HCT116 (cell line): ENCODE measurements at regions of chr21 and their contacts with region 1.

Region 1: DNA sequence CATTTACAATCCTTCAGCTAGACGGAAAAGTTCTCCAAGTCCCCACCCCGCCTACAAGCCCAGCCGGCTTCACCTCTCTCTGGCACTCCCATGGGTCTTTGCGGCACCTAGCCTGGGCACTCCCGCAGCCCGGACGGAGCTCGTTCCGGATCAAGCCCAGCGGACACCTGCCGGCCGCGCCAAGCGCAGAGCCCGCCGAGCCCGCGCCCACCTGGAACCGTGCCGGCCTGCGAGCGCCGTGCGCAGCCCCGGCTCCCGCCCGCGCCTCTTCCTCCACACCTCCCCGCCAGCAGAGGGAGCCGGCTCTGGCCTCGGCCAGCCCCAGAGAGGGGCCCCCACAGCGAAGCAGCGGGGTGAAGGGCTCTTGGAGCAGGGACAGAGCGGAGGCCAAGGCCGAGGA is 50.0 kb upstream of the KRTAP19-8 start:
- DNase-seq: no peak
- ATAC-seq: no peak
- H3K4me3 ChIP-seq: no peak overlapping the region
- H3K27ac ChIP-seq: no peak overlapping the region
- H3K4me1 ChIP-seq: no peaks in the 10 kb centered on the region
- H3K27me3 ChIP-seq: no peaks in the 10 kb centered on the region
- CTCF ChIP-seq: no peak
- POLR2A ChIP-seq: no peak
- RAD21 ChIP-seq: no peak

Region 2: GRCh38 chr21:29085106-29085752 is 2003.1 kb before region 1 on chr21:
- CTCF ChIA-PET with region 1: no interaction called
- POLR2A ChIA-PET with region 1: no interaction called
- RAD21 ChIA-PET with region 1: no interaction called
- intact Hi-C with region 1: loop called (anchors 5 kb)
- DNase-seq: no peak
- ATAC-seq: no peak
- H3K4me3 ChIP-seq: no peak overlapping the region
- H3K27ac ChIP-seq: no peak overlapping the region
- H3K4me1 ChIP-seq: 0 out of 4 replicates have a peak, but pooled peaks cover 0 to 4% of the 10 kb centered on the region in 2 experiments
- H3K27me3 ChIP-seq: no peaks in the 10 kb centered on the region
- CTCF ChIP-seq: no peak
- POLR2A ChIP-seq: no peak
- RAD21 ChIP-seq: no peak

Region 3: GRCh38 chr21:29164325-29164942 is 1923.9 kb before region 1 on chr21:
- CTCF ChIA-PET with region 1: no interaction called
- POLR2A ChIA-PET with region 1: no interaction called
- RAD21 ChIA-PET with region 1: no interaction called
- intact Hi-C with region 1: loop called (anchors 10 kb)
- DNase-seq: peak; percentile 69
- ATAC-seq: peak; percentile 72
- H3K4me3 ChIP-seq: no peak overlapping the region
- H3K27ac ChIP-seq: no peak overlapping the region
- H3K4me1 ChIP-seq: peaks cover 18 to 36% of the 10 kb centered on the region in 2 experiments
- H3K27me3 ChIP-seq: no peaks in the 10 kb centered on the region
- CTCF ChIP-seq: peak; percentile 67 to 84 (median 69)
- POLR2A ChIP-seq: no peak
- RAD21 ChIP-seq: peak; percentile 84

Region 4: DNA sequence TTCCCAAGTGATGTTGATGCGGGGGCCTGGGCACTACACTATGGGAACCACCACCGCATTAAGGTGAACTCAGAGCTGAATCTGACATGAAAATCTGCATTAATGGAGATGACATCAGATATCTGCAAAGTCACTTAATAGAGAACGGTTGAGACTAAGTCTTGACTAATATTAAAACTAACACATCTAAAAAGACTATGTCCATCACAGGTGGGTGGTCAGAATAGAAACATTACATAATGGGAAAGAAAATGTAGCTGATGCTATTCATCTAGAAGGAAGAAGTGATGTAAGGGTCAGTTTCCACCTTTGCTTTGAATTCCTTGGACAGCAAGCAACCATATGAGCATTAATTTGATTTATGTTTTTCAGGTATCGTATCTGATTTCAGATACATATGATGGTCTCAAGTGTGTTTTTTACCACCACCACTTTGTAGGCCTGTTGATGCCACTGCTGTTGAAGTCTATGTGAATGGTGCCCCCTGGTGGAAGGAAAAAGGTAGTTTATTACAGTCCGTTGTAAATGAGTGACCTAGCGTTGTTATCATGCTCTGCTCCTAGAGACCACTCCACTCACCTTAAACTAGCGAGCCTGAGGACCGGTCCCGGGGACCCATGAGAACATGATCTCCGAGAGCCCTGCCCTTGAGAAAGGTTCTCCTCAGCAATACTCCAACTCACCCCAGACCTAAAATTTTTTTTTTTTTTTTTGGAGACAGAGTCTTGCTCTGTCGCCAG is 1716.1 kb before region 1 on chr21:
- CTCF ChIA-PET with region 1: no interaction called
- POLR2A ChIA-PET with region 1: no interaction called
- RAD21 ChIA-PET with region 1: no interaction called
- intact Hi-C with region 1: loop called (anchors 10 kb)
- DNase-seq: peak; percentile 67
- ATAC-seq: peak; percentile 88
- H3K4me3 ChIP-seq: no peak overlapping the region
- H3K27ac ChIP-seq: no peak overlapping the region
- H3K4me1 ChIP-seq: no peaks in the 10 kb centered on the region
- H3K27me3 ChIP-seq: no peaks in the 10 kb centered on the region
- CTCF ChIP-seq: peak; percentile 59 to 82 (median 61); a peak in 5 of 6 replicates
- POLR2A ChIP-seq: no peak
- RAD21 ChIP-seq: peak; percentile 77

Region 5: DNA sequence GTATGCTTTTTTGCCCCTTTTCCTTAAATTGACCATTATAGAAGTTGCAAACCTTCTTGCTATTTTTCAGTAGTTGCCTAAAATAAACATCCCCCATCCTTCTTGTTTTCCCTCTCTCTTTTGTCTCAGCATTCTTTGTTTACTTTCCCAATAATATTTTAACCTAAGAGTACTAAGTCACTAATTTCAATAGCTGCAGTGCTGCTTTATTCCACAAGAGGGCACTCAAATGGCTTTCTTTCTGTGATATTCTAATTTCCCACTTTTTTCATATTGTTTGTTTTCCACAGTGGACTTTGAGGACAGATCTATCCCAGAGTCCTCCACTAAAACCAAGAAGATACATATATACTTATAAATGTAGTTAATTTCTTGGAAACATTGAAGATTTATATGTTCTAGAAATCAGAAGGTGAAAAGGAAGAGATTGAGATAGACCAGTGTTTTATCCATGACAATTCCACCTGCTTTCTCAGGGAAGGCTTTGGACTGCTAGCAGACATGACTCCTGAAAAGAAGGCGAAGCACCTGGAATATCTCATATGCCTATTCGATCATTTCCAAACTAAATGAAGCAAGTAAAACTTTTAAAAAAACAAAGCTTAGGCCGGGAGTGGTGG is 1043.8 kb before region 1 on chr21:
- CTCF ChIA-PET with region 1: no interaction called
- POLR2A ChIA-PET with region 1: no interaction called
- RAD21 ChIA-PET with region 1: no interaction called
- intact Hi-C with region 1: loop called (anchors 1 kb)
- DNase-seq: no peak
- ATAC-seq: no peak
- H3K4me3 ChIP-seq: no peak overlapping the region
- H3K27ac ChIP-seq: no peak overlapping the region
- H3K4me1 ChIP-seq: no peaks in the 10 kb centered on the region
- H3K27me3 ChIP-seq: no peaks in the 10 kb centered on the region
- CTCF ChIP-seq: peak in 2 of 3 experiments; percentile 60 to 76; a peak in 4 of 6 replicates
- POLR2A ChIP-seq: no peak
- RAD21 ChIP-seq: peak; percentile 10; the same call in 1 of the 2 replicates

Region 6: GRCh38 chr21:30340441-30341241 is 747.7 kb before region 1 on chr21:
- CTCF ChIA-PET with region 1: no interaction called
- POLR2A ChIA-PET with region 1: no interaction called
- RAD21 ChIA-PET with region 1: no interaction called
- intact Hi-C with region 1: loop called (anchors 1 kb)
- DNase-seq: peak; percentile 3
- ATAC-seq: no peak
- H3K4me3 ChIP-seq: no peak overlapping the region
- H3K27ac ChIP-seq: no peak overlapping the region
- H3K4me1 ChIP-seq: no peaks in the 10 kb centered on the region
- H3K27me3 ChIP-seq: no peaks in the 10 kb centered on the region
- CTCF ChIP-seq: peak in 2 of 3 experiments; percentile 69 to 72; a peak in 4 of 6 replicates
- POLR2A ChIP-seq: no peak
- RAD21 ChIP-seq: 0 out of 2 replicates have a peak, but pooled peaks have one; percentile 12

Region 7: DNA sequence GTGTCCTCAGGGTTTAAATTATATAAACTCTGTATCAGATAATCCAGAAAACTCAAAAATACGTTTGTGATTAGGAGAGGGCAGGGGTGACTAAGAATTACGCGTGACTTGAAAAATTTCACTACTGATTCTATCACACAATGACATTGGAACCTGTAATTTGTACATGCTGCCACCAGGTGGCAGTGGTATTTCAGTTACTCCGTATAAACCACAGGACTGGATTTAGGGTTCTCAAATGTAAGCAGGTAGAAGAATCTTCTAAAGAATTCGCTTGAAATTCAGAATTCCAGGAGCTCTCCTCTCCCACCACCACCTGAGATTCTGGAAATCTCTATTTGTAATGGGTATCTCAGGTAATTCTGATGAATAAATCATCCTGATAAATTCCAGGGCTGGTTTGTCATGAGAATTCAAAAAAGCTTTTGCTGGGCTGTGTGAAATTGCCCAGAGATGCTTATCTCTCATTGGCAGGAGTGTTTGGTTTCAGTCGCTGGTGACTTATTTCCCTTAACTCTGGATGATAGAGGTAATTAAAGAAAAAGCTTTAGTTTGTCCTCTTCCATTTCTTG is 257.0 kb before region 1 on chr21:
- CTCF ChIA-PET with region 1: interaction called, 4 read pairs
- POLR2A ChIA-PET with region 1: no interaction called
- RAD21 ChIA-PET with region 1: no interaction called
- intact Hi-C with region 1: loop called (anchors 1 kb)
- DNase-seq: peak; percentile 3
- ATAC-seq: no peak
- H3K4me3 ChIP-seq: no peak overlapping the region
- H3K27ac ChIP-seq: no peak overlapping the region
- H3K4me1 ChIP-seq: no peaks in the 10 kb centered on the region
- H3K27me3 ChIP-seq: no peaks in the 10 kb centered on the region
- CTCF ChIP-seq: peak in 2 of 3 experiments; percentile 48 to 72; a peak in 4 of 6 replicates
- POLR2A ChIP-seq: no peak
- RAD21 ChIP-seq: peak; percentile 26; the same call in 1 of the 2 replicates

Region 8: DNA sequence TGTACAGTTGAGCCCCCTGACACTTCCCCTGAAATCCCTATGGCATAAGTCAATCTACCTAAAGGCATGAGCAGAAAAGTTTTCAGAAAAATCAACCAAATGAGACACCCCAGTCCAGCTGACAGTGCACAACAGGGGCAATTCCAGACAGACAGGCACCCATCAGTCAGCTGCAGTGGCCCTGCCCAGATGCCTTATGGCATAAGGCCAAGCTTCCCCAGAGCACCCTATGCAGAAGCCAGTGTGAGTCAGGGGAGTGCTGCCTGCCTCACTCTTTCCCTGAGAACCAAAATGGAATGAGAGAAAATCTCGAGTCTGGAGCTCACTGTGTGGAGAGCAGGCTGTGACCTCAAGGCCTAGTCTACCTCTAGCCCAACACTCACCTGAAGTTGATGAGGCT is 1248.4 kb after region 1 on chr21:
- CTCF ChIA-PET with region 1: no interaction called
- POLR2A ChIA-PET with region 1: no interaction called
- RAD21 ChIA-PET with region 1: no interaction called
- intact Hi-C with region 1: no loop called
- DNase-seq: no peak
- ATAC-seq: no peak
- H3K4me3 ChIP-seq: no peak overlapping the region
- H3K27ac ChIP-seq: no peak overlapping the region; the same call in 1 of the 2 replicates
- H3K4me1 ChIP-seq: peaks cover 13 to 16% of the 10 kb centered on the region in 2 experiments
- H3K27me3 ChIP-seq: no peaks in the 10 kb centered on the region
- CTCF ChIP-seq: no peak
- POLR2A ChIP-seq: no peak
- RAD21 ChIP-seq: no peak